Psoas muscle (tissue), 8 donors: ENCODE measurements at regions of chr20 and their contacts with region 1.

Region 1: DNA sequence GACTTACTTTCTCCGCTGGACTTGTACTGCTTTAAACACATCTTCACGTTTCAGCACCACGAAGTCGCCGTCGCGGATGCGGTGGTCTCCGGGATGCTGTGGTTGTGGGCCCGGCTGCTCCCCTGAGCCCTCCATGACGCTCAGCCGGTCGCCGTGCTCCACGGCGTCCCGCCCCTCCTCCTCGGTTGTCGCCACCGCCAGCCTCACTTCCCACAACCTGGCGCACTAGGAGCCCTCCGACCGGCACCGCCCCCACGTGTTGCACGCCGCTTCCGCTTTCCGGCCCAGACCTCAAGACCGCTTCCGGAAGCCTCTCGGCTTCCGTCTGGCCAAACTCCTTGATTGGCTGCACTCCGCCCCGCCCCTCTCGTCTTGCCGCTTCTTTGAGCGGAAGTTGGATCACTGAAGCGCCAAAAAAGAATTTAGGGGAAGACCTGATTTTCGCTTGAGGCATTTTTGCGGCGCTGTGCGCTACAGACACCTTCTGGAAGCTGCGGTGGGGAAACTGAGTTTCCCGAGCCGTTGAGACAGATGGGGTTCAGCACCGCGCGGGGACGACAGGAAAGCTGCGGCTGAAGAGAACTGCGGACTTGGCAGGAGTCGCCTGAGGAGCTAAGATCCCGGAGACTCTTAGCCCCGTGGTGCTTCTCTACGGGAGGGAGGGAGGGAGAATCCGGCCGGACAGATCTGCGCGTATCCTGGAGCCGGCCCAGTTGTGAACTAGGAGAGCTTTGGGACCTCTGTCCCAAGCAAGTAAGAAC is at the starts of genes MCM8 and TRMT6:
- DNase-seq: peak; percentile 98
- ATAC-seq: peak; percentile 99 to 100 (median 100)
- H3K4me3 ChIP-seq: peak within 1 kb of the TSS; percentile 95
- H3K27ac ChIP-seq: peak within 1 kb of the TSS; percentile 91
- H3K4me1 ChIP-seq: peaks cover 16% of the 10 kb centered on the region
- H3K27me3 ChIP-seq: no peaks in the 10 kb centered on the region
- CTCF ChIP-seq: no peak
- total RNA-seq, gene MCM8: 3.9 to 8.0 (median 6.4) TPM
- total RNA-seq, gene TRMT6: 9.0 to 25.9 (median 21.6) TPM

Region 2: GRCh38 chr20:5557123-5557522 is 393.3 kb before region 1 on chr20:
- intact Hi-C with region 1: loop called in 1 of 2 experiments (anchors 10 kb)
- DNase-seq: peak; percentile 27 to 64
- ATAC-seq: peak; percentile 37 to 87 (median 75)
- H3K4me3 ChIP-seq: no peak overlapping the region
- H3K27ac ChIP-seq: no peak overlapping the region
- H3K4me1 ChIP-seq: no peaks in the 10 kb centered on the region
- H3K27me3 ChIP-seq: no peaks in the 10 kb centered on the region
- CTCF ChIP-seq: peak; percentile 60

Region 3: DNA sequence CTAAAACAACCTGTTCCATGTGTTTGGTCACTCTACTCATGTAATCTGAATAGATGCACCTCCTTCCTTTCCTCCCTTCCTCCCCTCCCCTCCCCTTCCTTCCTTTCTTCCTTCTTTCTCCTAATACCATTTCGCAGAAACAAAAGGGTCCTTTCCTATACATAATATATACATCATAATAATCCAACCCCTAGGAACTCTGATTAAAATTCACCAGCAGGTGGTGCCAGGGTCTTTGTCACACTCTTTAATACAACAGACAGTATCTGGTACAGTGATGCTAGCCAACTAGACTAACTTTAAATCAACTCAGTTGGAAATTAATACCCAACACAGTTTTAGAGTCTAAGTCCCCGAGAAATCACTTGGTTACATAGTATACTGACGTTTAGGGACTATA is 381.4 kb before region 1 on chr20:
- intact Hi-C with region 1: loop called in 1 of 2 experiments (anchors 10 kb)
- DNase-seq: no peak
- ATAC-seq: peak in 1 of 4 donors; percentile 75
- H3K4me3 ChIP-seq: no peak overlapping the region
- H3K27ac ChIP-seq: no peak overlapping the region
- H3K4me1 ChIP-seq: no peaks in the 10 kb centered on the region
- H3K27me3 ChIP-seq: no peaks in the 10 kb centered on the region
- CTCF ChIP-seq: peak; percentile 49

Region 4: GRCh38 chr20:5675103-5676091 is 275.1 kb before region 1 on chr20:
- intact Hi-C with region 1: no loop called
- DNase-seq: no peak
- ATAC-seq: no peak
- H3K4me3 ChIP-seq: no peak overlapping the region
- H3K27ac ChIP-seq: no peak overlapping the region
- H3K4me1 ChIP-seq: no peaks in the 10 kb centered on the region
- H3K27me3 ChIP-seq: no peaks in the 10 kb centered on the region
- CTCF ChIP-seq: no peak

Region 5: DNA sequence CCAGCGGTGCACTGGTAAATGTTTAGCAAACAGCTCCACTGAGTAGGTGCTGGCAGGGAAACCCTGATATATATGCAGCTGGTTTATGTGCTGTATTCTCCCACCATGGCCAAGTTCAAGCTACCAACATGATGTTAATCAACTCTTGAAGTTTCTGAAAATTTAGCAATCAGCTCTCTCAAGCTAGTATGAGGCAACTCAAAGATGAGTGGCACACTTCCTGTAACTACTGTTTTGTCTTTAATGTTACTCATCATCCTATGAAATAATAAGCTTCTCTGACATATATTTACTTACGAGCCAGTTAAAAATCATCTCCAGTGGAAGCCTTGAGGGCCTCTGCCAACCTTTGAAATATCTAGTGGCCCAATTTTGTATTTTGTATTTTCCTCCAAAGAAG is 54.8 kb before region 1 on chr20:
- intact Hi-C with region 1: no loop called
- DNase-seq: no peak
- ATAC-seq: no peak
- H3K4me3 ChIP-seq: no peak overlapping the region
- H3K27ac ChIP-seq: no peak overlapping the region
- H3K4me1 ChIP-seq: peaks cover 9% of the 10 kb centered on the region
- H3K27me3 ChIP-seq: no peaks in the 10 kb centered on the region
- CTCF ChIP-seq: no peak

Region 6: GRCh38 chr20:6074145-6074561 is 123.7 kb after region 1 on chr20:
- intact Hi-C with region 1: loop called (anchors 2 to 10 kb)
- DNase-seq: no peak
- ATAC-seq: peak in 1 of 4 donors; percentile 35
- H3K4me3 ChIP-seq: no peak overlapping the region
- H3K27ac ChIP-seq: no peak overlapping the region
- H3K4me1 ChIP-seq: peaks cover 9% of the 10 kb centered on the region
- H3K27me3 ChIP-seq: no peaks in the 10 kb centered on the region
- CTCF ChIP-seq: peak; percentile 27